ENCODE measurements at regions of chr11 and their contacts with region 1.

Region 1: DNA sequence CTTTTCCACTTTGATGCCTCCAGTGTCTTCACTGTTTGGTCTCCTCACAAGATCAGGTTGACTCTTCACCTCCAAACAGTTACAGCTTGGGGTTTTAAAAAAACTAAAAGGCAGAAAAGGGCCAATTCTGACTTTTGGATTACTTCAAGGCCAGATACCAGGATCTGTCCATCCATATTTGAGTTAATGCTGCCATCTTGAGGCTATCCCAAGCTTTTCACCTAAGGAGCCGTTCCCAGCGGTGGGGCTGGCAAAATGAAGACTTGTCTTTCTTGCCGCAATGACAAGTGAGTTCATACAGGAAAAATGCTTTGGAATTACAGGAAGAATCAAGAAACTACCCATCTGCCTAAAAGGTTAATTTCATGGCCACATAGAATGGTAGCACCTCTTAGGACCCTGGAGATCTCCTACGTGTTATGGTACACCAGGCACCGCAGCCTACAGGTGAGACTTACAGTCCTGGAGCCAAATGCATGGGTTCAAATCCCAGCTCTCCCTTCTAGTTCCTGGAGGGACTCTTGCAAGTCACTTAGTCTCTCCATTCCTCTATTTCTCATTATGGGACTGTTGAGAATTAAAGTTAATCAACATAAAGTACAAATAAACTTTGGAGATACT is 6.0 kb upstream of the OR5B21 start:
- DNase-seq: peak; percentile 76
- H3K4me3 Mint-ChIP-seq: no peak overlapping the region
- H3K27ac Mint-ChIP-seq: no peak overlapping the region
- H3K4me1 Mint-ChIP-seq: peaks cover 5% of the 10 kb centered on the region
- H3K27me3 Mint-ChIP-seq: peaks cover 10% of the 10 kb centered on the region
- CTCF ChIP-seq: peak; percentile 75

Region 2: DNA sequence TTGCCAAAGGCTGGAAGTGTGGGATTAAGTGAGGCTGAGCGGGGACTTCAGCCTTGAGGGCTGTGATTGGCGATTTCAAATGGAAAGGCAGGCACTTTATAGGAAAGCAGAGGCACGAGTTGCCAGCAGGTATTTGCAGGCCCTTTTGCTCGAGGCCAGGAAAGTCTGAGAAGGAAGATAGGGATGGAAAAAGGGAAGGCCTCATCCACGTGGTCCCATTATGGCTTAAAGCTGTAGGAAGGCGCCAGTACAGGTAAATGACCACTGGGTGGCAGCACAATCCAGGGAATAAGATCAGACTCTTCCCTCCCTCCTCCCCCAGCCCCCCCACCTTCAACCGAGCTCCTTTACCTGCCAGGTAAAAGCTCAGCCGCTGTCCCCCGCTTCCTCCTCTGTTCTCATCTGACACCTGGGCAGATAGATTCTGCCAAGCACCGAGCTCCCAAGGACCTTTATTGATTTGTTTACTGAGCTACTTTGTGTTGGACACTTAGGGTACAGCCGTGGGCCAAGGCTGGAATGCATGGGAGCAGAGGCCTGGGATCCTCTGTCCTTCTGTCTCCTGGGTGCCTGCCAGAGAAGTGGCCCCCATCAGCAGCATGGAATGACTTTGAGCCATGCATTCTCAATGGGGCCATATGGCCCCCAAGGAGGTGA is 1168.2 kb before region 1 on chr11:
- CTCF ChIA-PET with region 1: interaction called, 5 read pairs
- POLR2A ChIA-PET with region 1: no interaction called
- intact Hi-C with region 1: loop called (anchors 5 kb)
- DNase-seq: peak; percentile 85
- H3K4me3 Mint-ChIP-seq: no peak overlapping the region
- H3K27ac Mint-ChIP-seq: no peak overlapping the region
- H3K4me1 Mint-ChIP-seq: no peaks in the 10 kb centered on the region
- H3K27me3 Mint-ChIP-seq: no peaks in the 10 kb centered on the region
- CTCF ChIP-seq: peak; percentile 90

Region 3: DNA sequence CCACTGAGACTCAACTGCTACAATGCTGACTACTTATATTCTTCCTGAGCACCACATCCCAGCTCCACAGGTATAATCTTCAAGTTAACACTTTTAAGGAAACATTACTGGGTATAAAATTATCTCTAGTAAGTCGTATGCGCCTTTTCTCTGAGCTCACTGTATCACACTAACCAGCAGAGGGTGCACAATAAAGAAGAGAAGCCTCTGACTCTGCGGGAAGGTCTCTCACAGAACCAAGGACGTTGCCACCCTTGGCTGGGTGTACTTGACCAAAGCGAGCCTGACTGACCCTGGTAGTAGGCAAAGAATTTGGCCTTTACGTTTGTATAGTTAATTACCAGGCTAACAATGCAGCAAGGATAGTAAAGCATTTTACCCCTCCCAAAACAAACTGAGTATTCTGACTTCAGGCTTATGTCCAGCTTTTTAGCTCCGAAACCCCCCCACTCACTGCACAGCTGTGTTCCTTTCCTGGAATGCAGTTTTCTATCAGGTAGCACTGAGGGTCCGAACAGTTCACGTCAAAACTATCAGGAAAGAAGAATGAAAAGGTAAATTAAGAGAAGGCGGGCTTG is 762.1 kb before region 1 on chr11 and contains the start of gene BTBD18:
- CTCF ChIA-PET with region 1: interaction called, 8 read pairs
- POLR2A ChIA-PET with region 1: no interaction called
- intact Hi-C with region 1: loop called (anchors 5 kb)
- DNase-seq: peak; percentile 51
- H3K4me3 Mint-ChIP-seq: no peak within 1 kb of the TSS
- H3K27ac Mint-ChIP-seq: no peak within 1 kb of the TSS
- H3K4me1 Mint-ChIP-seq: no peaks in the 10 kb centered on the region
- H3K27me3 Mint-ChIP-seq: no peaks in the 10 kb centered on the region
- CTCF ChIP-seq: peak; percentile 45
- total RNA-seq, gene BTBD18: not detected in 2 replicates

Region 4: DNA sequence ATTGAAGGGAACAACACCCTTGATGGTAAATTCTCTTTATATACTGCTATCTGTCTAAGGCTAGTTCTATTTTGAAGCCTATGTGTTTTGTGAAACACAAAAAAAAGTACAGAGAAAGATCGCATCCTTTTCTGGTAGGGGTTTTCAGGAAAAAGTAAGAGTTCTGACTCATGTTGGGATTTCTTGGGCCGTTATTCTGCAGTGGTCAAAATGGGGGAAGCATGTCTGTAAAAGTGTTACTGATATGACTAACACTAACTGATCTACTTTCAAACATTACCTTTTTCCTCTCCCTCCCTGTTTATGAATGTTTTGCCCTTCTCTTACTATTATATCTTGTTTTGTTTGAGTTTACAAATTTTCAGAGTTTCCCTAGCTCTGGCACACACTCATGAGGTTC is 698.4 kb before region 1 on chr11:
- CTCF ChIA-PET with region 1: interaction called, 4 read pairs
- POLR2A ChIA-PET with region 1: interaction called, 4 read pairs
- intact Hi-C with region 1: loop called (anchors 5 kb)
- DNase-seq: no peak
- H3K4me3 Mint-ChIP-seq: no peak overlapping the region
- H3K27ac Mint-ChIP-seq: no peak overlapping the region
- H3K4me1 Mint-ChIP-seq: no peaks in the 10 kb centered on the region
- H3K27me3 Mint-ChIP-seq: no peaks in the 10 kb centered on the region
- CTCF ChIP-seq: no peak

Region 5: GRCh38 chr11:58286249-58286648 is 227.6 kb before region 1 on chr11:
- CTCF ChIA-PET with region 1: interaction called, 3 read pairs
- POLR2A ChIA-PET with region 1: no interaction called
- intact Hi-C with region 1: loop called (anchors 5 kb)
- DNase-seq: peak; percentile 56
- H3K4me3 Mint-ChIP-seq: no peak overlapping the region
- H3K27ac Mint-ChIP-seq: no peak overlapping the region
- H3K4me1 Mint-ChIP-seq: no peaks in the 10 kb centered on the region
- H3K27me3 Mint-ChIP-seq: no peaks in the 10 kb centered on the region
- CTCF ChIP-seq: peak; percentile 69

Region 6: DNA sequence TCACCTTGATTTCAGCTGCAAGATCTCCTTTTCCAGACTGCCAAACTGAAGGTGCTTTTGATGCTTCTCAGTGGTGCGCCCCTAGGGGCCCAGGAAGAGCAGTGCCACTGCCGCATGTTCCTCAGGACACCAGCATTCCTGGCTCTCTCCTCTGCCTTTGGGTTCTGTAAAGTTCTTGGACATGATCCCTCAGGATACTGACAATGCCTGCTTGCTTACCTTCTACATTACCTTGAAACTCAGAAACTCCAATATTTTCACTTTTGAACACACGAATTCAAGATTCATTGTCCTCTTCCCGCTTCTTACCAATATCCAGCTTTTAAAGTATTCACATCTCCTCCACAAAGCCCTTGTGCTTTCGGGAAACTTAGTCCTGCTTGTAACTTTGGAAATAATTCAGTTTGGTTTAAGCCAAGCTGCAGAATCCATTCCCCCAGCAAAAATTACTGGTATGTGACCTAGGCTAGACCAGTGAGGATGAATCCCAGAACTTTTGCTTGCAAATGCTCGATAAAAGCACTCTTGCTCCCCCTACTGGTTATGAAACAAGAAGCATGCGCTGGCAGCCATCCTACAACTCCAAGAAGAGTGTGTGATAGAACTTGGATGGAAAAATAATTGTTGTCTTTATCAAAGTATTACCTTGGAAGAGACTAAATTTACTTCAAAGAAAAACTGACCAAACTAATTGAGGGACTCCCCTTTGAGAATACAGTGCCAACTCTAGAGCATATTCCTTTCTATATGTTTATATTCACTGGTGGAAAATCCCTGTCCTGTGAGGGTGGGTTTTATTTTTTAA is 10.6 kb after region 1 on chr11:
- CTCF ChIA-PET with region 1: interaction called, 42 read pairs
- POLR2A ChIA-PET with region 1: no interaction called
- intact Hi-C with region 1: no loop called
- DNase-seq: peak; percentile 78
- H3K4me3 Mint-ChIP-seq: no peak overlapping the region
- H3K27ac Mint-ChIP-seq: no peak overlapping the region
- H3K4me1 Mint-ChIP-seq: peaks cover 5% of the 10 kb centered on the region
- H3K27me3 Mint-ChIP-seq: peaks cover 5% of the 10 kb centered on the region
- CTCF ChIP-seq: peak; percentile 83

Region 7: GRCh38 chr11:58866788-58867187 is 352.9 kb after region 1 on chr11:
- CTCF ChIA-PET with region 1: no interaction called
- POLR2A ChIA-PET with region 1: no interaction called
- intact Hi-C with region 1: no loop called
- DNase-seq: no peak
- H3K4me3 Mint-ChIP-seq: no peak overlapping the region
- H3K27ac Mint-ChIP-seq: no peak overlapping the region
- H3K4me1 Mint-ChIP-seq: no peaks in the 10 kb centered on the region
- H3K27me3 Mint-ChIP-seq: no peaks in the 10 kb centered on the region
- CTCF ChIP-seq: no peak

Measured in MCF 10A (cell line).